ENCODE measurements at regions of chr6 and their contacts with region 1.

Region 1: DNA sequence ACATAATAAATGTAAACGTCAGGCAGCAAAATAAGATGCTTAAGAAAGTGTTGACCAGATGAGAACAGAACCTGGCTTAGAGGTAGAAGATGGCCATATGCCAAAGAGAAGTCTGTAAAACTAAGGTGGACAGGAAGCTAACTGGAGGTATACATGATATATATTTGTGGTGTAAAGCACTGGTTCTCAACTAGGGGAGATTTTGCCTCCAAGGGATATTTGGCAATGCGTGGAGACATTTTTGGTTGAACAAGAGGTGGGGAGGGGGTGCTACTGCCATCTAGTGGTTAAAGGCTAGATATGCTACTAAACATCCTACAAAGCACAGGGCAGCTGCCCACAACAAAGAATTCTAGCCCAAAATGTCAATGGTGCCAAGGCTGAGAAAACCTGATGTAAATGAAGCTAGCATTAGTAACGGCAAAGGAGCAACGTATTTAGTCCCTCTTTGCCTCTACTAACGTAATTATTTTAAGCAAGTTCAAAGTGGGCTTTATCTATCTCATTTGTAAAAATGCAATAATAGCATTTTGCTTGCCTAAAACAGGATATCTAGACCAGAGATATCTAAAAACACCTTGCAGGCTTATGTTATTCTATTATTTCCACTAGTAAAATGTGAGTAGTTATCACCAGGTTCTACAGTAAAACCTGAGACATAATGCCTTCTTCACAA is 182.6 kb downstream of the RNGTT start:
- DNase-seq: peak; percentile 61
- ATAC-seq: peak; percentile 85
- H3K4me3 Mint-ChIP-seq: no peak overlapping the region
- H3K27ac Mint-ChIP-seq: no peak overlapping the region
- H3K4me1 Mint-ChIP-seq: peaks cover 11% of the 10 kb centered on the region
- H3K27me3 Mint-ChIP-seq: no peaks in the 10 kb centered on the region

Region 2: GRCh38 chr6:88459643-88460042 is 321.2 kb before region 1 on chr6:
- CTCF ChIA-PET with region 1: no interaction called
- POLR2A ChIA-PET with region 1: no interaction called
- intact Hi-C with region 1: loop called in 1 of 2 experiments (anchors 10 kb)
- DNase-seq: no peak
- ATAC-seq: no peak
- H3K4me3 Mint-ChIP-seq: no peak overlapping the region
- H3K27ac Mint-ChIP-seq: no peak overlapping the region
- H3K4me1 Mint-ChIP-seq: no peaks in the 10 kb centered on the region
- H3K27me3 Mint-ChIP-seq: peaks cover 14% of the 10 kb centered on the region

Region 3: GRCh38 chr6:88666901-88667300 is 114.0 kb before region 1 on chr6:
- CTCF ChIA-PET with region 1: no interaction called
- POLR2A ChIA-PET with region 1: no interaction called
- intact Hi-C with region 1: no loop called
- DNase-seq: no peak
- ATAC-seq: no peak
- H3K4me3 Mint-ChIP-seq: no peak overlapping the region
- H3K27ac Mint-ChIP-seq: no peak overlapping the region
- H3K4me1 Mint-ChIP-seq: peaks cover 6% of the 10 kb centered on the region
- H3K27me3 Mint-ChIP-seq: no peaks in the 10 kb centered on the region